ENCODE measurements at regions of chr1 and their contacts with region 1.

Region 1: DNA sequence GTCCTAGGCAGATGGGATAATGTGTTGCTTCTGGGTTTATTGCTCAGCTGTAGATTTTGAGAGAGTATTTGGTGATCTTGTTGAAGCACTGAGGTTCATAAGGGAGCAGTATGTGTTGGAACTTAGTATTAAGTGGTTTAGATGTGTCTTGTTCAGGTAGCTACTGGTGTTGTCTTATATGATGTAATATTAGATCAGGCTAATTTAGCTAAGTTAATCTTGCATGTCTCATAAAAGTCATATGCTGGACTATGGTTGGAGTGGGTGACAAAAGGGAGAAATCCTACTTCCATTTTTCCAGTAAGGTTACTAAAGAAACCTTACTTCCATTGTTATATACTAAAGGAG is 196.4 kb downstream of the CLEC20A start:
- DNase-seq: no peak
- H3K4me3 ChIP-seq: no peak overlapping the region
- H3K27ac ChIP-seq: no peak overlapping the region
- H3K27me3 ChIP-seq: no peaks in the 10 kb centered on the region
- CTCF ChIP-seq: no peak

Region 2: DNA sequence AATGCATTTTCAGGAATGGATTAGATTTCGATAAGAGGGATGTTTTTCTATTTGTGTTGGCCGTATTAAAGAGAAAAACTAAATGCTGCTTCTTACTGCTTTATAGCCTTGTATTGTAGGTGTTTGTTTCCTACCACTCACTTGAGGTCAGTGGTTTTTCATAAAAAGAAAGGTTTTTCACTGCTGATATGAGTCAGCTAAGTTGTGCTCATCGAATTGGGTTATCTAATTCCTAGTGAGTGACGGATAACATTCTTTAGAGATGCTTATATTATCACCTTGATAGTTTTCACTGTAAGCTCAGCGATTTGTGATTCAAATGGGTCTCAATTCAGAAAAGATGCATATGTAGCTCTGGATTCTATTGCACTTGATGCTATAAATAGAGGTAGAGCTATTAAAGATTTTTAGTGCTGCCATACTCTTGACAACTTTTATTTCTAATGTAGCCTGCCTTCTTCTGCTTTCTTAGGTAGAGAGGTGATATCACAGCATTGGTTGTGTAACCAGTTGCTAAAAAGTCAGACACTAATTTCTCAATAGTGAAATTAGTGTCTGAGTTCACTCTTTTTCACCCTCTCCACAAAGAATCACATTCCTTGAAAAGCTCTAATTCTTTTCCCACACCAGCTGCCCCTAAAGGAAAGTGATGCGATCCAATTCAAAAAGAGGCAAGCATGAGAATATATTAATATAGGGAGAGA is 26.5 kb before region 1 on chr1:
- CTCF ChIA-PET with region 1: interaction called, 14 read pairs
- POLR2A ChIA-PET with region 1: no interaction called
- DNase-seq: no peak
- H3K4me3 ChIP-seq: no peak overlapping the region
- H3K27ac ChIP-seq: no peak overlapping the region
- H3K27me3 ChIP-seq: no peaks in the 10 kb centered on the region
- CTCF ChIP-seq: no peak

Region 3: DNA sequence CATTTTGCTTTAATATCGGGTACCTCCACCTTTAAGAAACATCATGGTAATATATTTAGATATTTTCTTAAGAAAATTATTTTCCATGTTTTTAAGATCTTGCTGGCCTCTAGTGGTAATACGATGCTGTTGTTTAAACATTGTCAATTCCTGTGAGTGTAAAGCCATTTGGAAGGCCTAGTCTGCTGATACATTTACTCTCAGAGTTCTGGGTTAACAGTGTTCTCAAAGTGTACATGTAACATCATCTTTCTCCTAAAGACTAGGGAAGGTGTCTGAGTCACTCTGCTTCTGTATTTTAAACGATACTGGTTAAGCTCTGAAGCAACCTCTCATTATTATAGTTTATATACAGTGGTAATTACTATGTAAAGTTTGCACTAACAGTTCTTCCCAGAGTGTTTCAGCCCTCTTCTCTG is 17.4 kb before region 1 on chr1:
- CTCF ChIA-PET with region 1: interaction called, 35 read pairs
- POLR2A ChIA-PET with region 1: no interaction called
- DNase-seq: peak; percentile 38
- H3K4me3 ChIP-seq: no peak overlapping the region
- H3K27ac ChIP-seq: no peak overlapping the region
- H3K27me3 ChIP-seq: no peaks in the 10 kb centered on the region
- CTCF ChIP-seq: peak; percentile 73

Region 4: GRCh38 chr1:178310685-178311105 is 10.4 kb after region 1 on chr1:
- CTCF ChIA-PET with region 1: interaction called, 56 read pairs
- POLR2A ChIA-PET with region 1: no interaction called
- DNase-seq: peak; percentile 21
- H3K4me3 ChIP-seq: no peak overlapping the region
- H3K27ac ChIP-seq: no peak overlapping the region
- H3K27me3 ChIP-seq: no peaks in the 10 kb centered on the region
- CTCF ChIP-seq: peak; percentile 75

Region 5: DNA sequence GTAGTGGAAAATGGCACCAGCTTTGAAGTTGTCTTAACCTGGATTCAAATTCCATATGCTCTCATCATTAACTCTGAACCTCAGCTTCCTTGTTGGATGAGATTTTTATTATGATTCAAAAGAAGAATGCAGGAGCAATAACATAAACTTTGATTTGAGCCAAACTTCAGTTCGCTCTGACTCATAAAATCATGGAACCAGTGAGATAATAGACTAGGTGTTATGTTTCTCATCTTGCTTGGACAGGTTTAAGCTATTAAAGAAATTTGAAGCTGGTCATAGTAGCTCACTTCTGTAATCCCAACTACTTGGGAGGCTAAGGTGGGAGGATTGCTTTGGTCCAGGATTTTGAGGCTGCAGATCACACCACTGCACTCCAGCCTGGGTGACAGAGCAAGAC is 23.7 kb after region 1 on chr1:
- CTCF ChIA-PET with region 1: interaction called, 13 read pairs
- POLR2A ChIA-PET with region 1: no interaction called
- DNase-seq: no peak
- H3K4me3 ChIP-seq: no peak overlapping the region
- H3K27ac ChIP-seq: no peak overlapping the region
- H3K27me3 ChIP-seq: no peaks in the 10 kb centered on the region
- CTCF ChIP-seq: no peak

Region 6: DNA sequence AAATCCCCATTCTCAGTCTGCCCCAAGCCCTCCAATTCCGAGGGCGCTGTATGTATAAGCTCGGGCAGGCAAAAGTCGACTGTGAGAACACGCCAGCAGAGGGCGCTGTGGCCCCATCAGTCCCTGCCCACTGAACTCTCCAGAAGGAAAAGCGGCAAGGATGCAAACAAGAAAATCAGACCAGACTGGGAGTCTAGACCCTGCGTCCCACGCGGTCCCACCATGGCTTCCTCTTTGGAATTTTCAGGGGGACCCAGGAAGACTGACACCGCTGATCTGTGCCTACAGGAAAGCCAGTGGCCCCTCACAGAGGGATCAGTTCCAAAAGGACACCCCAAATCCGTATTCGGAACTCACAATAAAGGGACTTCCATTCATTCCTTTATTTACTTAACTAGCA is 232.1 kb after region 1 on chr1:
- CTCF ChIA-PET with region 1: interaction called, 55 read pairs
- POLR2A ChIA-PET with region 1: no interaction called
- DNase-seq: peak; percentile 63
- H3K4me3 ChIP-seq: no peak overlapping the region
- H3K27ac ChIP-seq: no peak overlapping the region
- H3K27me3 ChIP-seq: no peaks in the 10 kb centered on the region
- CTCF ChIP-seq: peak; percentile 90

Region 7: DNA sequence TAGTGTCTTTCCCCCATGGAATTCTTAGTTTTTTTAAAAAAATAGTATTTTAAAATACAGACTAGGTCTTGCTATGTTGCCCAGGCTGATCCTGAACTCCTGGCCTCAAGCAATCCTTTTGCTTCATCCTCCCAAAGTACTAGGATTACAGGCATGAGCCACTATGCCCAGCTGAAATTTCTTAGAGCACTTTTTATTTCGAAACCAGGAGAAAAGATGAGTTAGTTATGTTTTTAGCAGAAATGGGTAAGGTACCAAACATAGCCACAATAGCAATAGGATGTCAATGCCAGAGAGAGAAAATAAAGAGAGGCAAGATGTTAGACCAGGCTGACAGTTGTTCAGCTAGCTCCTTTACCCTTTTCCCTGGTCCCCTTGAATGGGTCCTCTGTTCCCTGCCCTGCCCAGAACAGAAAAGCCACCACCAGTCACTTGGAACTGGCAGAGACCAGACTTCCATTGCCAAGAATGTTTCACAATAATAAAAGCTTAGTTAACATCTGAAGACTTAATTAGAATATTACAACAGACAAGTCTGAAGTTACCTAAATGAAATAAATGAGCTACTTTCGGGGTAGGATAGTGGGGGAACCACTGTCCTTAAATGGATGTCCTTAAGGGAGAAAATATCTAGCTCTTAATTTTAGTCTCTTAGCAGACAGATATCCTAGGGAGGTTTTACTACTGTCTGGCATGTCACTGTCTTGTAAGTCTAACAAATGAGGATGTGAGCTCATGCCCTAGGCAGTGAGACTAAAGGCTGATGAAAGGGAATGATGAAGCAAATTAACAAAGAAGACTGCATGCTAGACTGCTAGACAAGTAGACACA is 874.9 kb after region 1 on chr1:
- CTCF ChIA-PET with region 1: no interaction called
- POLR2A ChIA-PET with region 1: no interaction called
- DNase-seq: no peak
- H3K4me3 ChIP-seq: no peak overlapping the region
- H3K27ac ChIP-seq: no peak overlapping the region
- H3K27me3 ChIP-seq: no peaks in the 10 kb centered on the region
- CTCF ChIP-seq: no peak

Measured in AG04450 (cell line).